ENCODE measurements at regions of chrX and their contacts with region 1.

Region 1: DNA sequence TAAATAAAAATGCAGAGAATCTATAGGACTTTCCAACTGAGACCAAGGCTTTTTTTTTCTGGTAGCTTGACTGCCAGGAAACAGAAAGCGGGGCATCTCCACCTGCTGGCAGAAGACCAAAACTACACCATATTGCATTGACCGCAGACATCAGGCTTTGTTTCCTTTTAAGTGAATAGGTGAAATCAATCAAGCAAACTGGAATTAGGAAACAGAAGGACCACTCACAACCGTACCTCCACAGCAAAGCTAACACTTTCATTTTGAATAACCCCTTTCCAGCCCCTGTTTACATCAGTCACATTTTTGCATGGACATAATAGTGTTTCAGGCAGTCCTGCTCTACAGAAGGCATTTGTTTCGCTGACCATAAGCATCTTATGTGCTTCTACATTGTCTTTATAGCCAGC is 218.2 kb downstream of the IDS start:
- DNase-seq: peak; percentile 31 to 42 (median 36)
- ATAC-seq: peak; percentile 61; the same call in 2 of the 3 replicates
- H3K4me3 ChIP-seq: no peak overlapping the region
- H3K27ac ChIP-seq: no peak overlapping the region
- H3K4me1 ChIP-seq: no peaks in the 10 kb centered on the region
- H3K27me3 ChIP-seq: no peaks in the 10 kb centered on the region
- CTCF ChIP-seq: peak; percentile 35 to 65 (median 55); a peak in 5 of 6 replicates
- EP300 ChIP-seq: no peak
- POLR2A ChIP-seq: no peak
- RAD21 ChIP-seq: peak; percentile 62 to 76

Region 2: GRCh38 chrX:148902581-148902980 is 384.4 kb before region 1 on chrX:
- CTCF ChIA-PET with region 1: no interaction called
- POLR2A ChIA-PET with region 1: no interaction called
- in situ Hi-C with region 1: no loop called
- intact Hi-C with region 1: no loop called
- DNase-seq: no peak
- ATAC-seq: no peak
- H3K4me3 ChIP-seq: no peak overlapping the region
- H3K27ac ChIP-seq: no peak overlapping the region
- H3K4me1 ChIP-seq: no peaks in the 10 kb centered on the region
- H3K27me3 ChIP-seq: no peaks in the 10 kb centered on the region
- CTCF ChIP-seq: no peak
- EP300 ChIP-seq: no peak
- POLR2A ChIP-seq: no peak
- RAD21 ChIP-seq: no peak

Region 3: DNA sequence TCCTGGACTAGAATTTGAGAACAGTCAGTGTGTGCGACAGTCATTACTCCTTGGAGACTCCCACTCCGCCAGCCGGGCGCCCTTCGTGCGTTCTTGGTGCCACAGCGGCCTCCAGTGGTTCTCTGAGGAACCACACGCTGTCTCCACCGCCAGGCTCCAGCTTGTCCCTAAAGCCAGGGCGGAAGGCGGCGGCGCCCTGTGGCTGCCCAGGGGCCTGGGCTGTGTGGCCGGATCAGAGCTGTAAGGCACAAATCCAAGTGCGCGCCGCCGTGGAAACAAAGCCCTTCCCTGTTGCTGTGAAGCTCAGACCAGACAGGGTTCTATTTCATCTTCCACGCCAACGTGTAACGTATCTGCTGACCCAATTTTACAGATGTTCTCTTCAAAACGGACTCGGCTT is 184.0 kb after region 1 on chrX:
- CTCF ChIA-PET with region 1: no interaction called
- POLR2A ChIA-PET with region 1: no interaction called
- in situ Hi-C with region 1: no loop called
- intact Hi-C with region 1: loop called (anchors 5 kb)
- DNase-seq: peak; percentile 80 to 82 (median 80)
- ATAC-seq: peak; percentile 100
- H3K4me3 ChIP-seq: no peak overlapping the region
- H3K27ac ChIP-seq: no peak overlapping the region
- H3K4me1 ChIP-seq: peaks cover 0 to 4% of the 10 kb centered on the region in 2 experiments; a peak in 2 of 5 replicates
- H3K27me3 ChIP-seq: peaks cover 0 to 7% of the 10 kb centered on the region in 2 experiments; a peak in 1 of 5 replicates
- CTCF ChIP-seq: peak; percentile 89 to 92 (median 89)
- EP300 ChIP-seq: no peak
- POLR2A ChIP-seq: no peak
- RAD21 ChIP-seq: peak; percentile 88 to 94

Region 4: GRCh38 chrX:150165776-150166610 is 879.0 kb after region 1 on chrX:
- CTCF ChIA-PET with region 1: no interaction called
- POLR2A ChIA-PET with region 1: no interaction called
- in situ Hi-C with region 1: no loop called
- intact Hi-C with region 1: no loop called
- DNase-seq: no peak
- ATAC-seq: no peak
- H3K4me3 ChIP-seq: no peak overlapping the region
- H3K27ac ChIP-seq: no peak overlapping the region
- H3K4me1 ChIP-seq: no peaks in the 10 kb centered on the region
- H3K27me3 ChIP-seq: no peaks in the 10 kb centered on the region
- CTCF ChIP-seq: no peak
- EP300 ChIP-seq: no peak
- POLR2A ChIP-seq: no peak
- RAD21 ChIP-seq: no peak